Endothelial cell of umbilical vein (primary cell): ENCODE measurements at regions of chr19 and their contacts with region 1.

Region 1: DNA sequence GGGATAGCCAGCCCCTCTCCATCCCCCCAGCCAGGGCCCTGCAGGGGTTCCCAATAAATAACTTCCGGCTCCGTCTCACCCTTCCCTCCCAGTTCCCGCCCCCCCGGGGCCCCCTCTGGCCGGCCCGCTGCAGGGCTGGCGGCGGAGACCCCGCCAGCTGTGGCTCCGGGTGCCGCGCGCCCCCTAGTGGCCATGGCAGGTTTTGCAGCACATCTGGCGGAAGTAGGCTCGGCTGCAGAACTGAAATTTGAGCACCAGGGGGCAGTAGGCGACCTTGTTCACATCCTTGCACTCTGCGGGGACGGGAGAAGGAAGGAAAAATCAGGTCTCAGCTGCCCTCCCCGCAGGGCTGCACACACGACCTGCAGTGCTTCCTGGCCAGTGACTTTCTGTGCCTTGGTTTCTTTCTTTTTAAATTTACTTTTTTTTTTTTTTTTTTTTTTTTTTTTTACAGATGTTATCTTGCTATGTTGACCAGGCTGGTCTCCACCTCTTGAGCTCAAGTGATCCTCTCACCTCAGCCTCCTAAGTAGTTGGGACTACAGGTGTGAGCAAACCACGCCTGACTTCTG is 3.6 kb upstream of the MYO1F start:
- DNase-seq: peak; percentile 57
- H3K4me3 ChIP-seq: no peak overlapping the region
- H3K27ac ChIP-seq: no peak overlapping the region
- H3K4me1 ChIP-seq: no peaks in the 10 kb centered on the region
- H3K27me3 ChIP-seq: peaks cover 0 to 4% of the 10 kb centered on the region in 2 experiments
- CTCF ChIP-seq: peak; percentile 99 to 100
- POLR2A ChIP-seq: no peak

Region 2: GRCh38 chr19:8569066-8569771 is 11.6 kb before region 1 on chr19:
- CTCF ChIA-PET with region 1: interaction called, 73 read pairs
- POLR2A ChIA-PET with region 1: no interaction called
- dilution Hi-C with region 1: no loop called
- intact Hi-C with region 1: no loop called
- DNase-seq: no peak
- H3K4me3 ChIP-seq: no peak overlapping the region
- H3K27ac ChIP-seq: no peak overlapping the region
- H3K4me1 ChIP-seq: no peaks in the 10 kb centered on the region
- H3K27me3 ChIP-seq: no peaks in the 10 kb centered on the region
- CTCF ChIP-seq: no peak
- POLR2A ChIP-seq: no peak

Region 3: DNA sequence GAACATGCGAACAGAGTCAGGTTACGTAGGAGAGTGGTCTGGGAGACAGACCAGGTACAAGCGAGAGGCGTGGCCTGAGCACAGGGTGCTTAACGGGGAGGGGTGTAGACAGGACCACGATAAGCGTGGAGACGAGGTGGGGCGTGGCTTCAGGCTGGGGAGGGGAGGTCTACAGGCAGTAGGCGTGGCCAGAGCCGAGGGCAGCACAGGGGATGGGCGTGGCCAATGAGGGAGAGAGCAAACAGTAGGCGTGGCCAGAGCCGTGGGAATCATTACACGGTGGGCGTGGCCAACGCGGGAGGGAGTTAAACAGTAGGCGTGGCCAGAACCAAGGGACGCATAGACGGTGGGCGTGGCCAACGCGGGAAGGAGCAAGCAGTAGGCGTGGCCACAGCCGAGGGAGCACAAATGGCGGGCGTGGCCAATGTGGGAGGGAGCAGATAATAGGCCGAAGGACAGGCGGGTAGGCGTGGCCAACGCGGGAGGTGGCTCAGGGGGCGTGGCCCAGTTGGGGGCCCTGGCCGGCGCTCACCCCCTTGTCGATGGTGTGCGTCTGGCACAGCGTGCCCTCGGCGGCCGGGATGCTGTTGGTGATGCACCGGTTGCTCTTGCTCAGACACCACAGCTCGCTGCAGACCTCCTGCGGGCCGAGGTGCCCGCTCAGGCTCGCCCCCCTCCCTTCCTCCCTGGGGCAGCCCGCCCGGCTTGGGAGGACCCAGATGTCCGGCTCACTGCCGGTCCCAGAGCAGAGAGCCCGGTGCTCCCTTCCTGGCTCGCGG is 11.6 kb after region 1 on chr19:
- CTCF ChIA-PET with region 1: interaction called, 15 read pairs
- POLR2A ChIA-PET with region 1: no interaction called
- dilution Hi-C with region 1: no loop called
- intact Hi-C with region 1: no loop called
- DNase-seq: peak; percentile 86
- H3K4me3 ChIP-seq: no peak overlapping the region
- H3K27ac ChIP-seq: no peak overlapping the region
- H3K4me1 ChIP-seq: no peaks in the 10 kb centered on the region
- H3K27me3 ChIP-seq: peaks cover 0 to 3% of the 10 kb centered on the region in 2 experiments
- CTCF ChIP-seq: no peak
- POLR2A ChIP-seq: peak; percentile 38

Region 4: DNA sequence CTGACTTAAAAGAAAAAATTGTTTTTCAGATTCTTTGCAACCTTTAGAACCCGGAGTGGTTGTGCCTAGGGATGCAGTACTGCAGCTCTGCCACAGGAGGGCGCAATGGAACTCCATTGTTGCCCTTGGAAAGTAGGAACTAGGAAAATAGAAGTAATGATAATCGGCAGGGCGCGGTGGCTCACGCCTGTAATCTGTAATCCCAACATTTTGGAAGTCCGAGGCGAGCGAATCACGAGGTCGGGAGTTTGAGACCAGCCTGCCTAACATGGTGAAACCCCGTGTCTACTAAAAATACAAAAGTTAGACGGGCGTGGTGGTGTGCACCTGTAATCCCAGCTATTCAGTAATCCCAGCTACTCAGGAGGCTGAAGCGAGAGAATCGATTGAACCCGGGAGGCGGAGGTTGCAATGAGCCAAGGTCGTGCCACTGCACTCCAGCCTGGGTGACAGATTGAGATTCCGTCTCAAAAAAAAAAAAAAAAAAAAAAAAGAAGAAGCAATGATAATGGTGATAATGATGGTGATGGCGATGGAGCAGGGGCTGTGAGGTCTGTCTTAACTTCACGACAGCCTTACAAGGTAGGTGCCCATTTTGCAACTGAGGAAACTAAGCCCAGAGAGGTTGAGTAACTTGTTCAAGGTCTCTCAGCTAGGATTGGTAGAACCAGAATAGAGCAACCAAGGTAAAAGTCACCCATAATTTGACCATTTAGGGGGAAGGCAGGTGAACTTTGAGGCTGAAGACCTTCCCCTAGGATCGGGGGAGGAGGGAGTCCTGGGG is 35.2 kb after region 1 on chr19:
- CTCF ChIA-PET with region 1: interaction called, 12 read pairs
- POLR2A ChIA-PET with region 1: no interaction called
- dilution Hi-C with region 1: no loop called
- intact Hi-C with region 1: loop called (anchors 5 kb)
- DNase-seq: peak; percentile 43
- H3K4me3 ChIP-seq: no peak overlapping the region
- H3K27ac ChIP-seq: no peak overlapping the region
- H3K4me1 ChIP-seq: no peaks in the 10 kb centered on the region
- H3K27me3 ChIP-seq: no peaks in the 10 kb centered on the region
- CTCF ChIP-seq: peak; percentile 88 to 91
- POLR2A ChIP-seq: no peak

Region 5: GRCh38 chr19:8641908-8642547 is 61.2 kb after region 1 on chr19:
- CTCF ChIA-PET with region 1: interaction called, 82 read pairs
- POLR2A ChIA-PET with region 1: no interaction called
- dilution Hi-C with region 1: no loop called
- intact Hi-C with region 1: loop called (anchors 1 kb)
- DNase-seq: peak; percentile 44
- H3K4me3 ChIP-seq: no peak overlapping the region
- H3K27ac ChIP-seq: no peak overlapping the region
- H3K4me1 ChIP-seq: no peaks in the 10 kb centered on the region
- H3K27me3 ChIP-seq: no peaks in the 10 kb centered on the region
- CTCF ChIP-seq: peak; percentile 48 to 49
- POLR2A ChIP-seq: no peak